PC-3 (cell line): ENCODE measurements at regions of chr10 and their contacts with region 1.

Region 1: DNA sequence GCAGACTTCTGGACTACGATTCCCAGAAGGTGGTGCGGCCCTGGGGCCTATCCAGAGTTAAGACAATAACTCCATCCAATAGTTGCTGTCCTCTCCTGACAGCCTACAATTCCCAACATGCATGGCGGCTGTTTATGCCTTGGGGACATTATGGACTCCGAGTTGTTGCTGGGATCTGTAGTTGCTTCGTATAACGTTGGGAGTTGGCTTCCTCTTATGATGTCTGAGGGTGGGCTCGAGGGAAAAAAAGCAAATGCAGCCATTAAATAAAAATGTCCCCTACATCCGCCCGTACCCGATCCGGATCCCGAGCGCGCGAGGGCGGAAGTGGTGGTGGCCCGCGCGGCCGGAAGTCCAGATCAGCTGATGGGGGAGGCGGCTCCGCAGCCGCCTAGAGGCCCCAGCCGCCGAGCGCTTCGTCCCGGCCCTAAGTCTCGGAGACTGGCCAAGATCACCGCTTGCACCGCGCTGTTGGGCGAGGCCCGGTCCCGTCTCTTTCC is at the start of gene ZSWIM8:
- DNase-seq: peak; percentile 100
- ATAC-seq: peak; percentile 81
- H3K4me3 ChIP-seq: peak within 1 kb of the TSS; percentile 80
- H3K27ac ChIP-seq: peak within 1 kb of the TSS; percentile 36
- H3K4me1 ChIP-seq: peaks cover 38% of the 10 kb centered on the region
- H3K27me3 ChIP-seq: no peaks in the 10 kb centered on the region
- CTCF ChIP-seq: no peak
- total RNA-seq, gene ZSWIM8: 152 and 173 TPM in 2 replicates

Region 2: DNA sequence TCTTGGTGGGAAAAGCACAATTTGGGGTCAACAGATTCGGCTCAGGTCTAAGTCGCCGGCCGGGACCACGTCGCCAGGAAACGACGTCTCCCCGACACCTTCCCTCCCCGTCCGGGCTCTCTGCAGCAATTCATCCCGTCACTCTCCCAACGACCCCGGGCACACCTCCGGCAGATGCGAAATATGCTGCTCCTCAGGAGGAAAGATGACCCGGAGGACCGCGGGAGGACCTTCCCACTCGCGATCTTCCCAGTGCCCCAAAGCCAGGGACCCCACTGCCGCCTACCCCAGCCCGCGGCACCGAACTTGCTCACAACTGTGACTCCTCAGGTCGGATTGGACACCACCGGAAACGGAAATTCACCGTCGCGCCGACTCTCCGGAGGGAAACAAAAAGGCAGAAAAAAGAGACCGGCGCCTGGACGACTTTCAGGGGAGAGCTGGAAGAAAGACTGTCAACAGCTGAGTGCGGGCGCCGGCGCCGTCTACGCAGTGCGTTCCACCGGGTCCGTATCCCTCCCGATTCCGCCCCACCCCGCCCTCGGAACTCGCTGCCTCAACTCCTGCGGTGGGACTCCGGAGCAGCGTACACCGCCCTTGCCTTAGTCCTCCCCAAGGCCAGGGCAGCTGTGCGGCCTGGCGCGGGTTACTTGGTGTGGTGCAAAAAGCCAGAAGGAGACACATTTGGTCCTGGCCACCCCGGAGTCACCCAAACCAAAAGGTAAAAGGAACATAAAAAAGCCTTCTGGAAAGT is 54.9 kb before region 1 on chr10:
- CTCF ChIA-PET with region 1: interaction called, 3 read pairs
- POLR2A ChIA-PET with region 1: interaction called, 51 read pairs
- intact Hi-C with region 1: loop called (anchors 2 kb)
- DNase-seq: peak; percentile 100
- ATAC-seq: peak; percentile 87
- H3K4me3 ChIP-seq: peak overlapping the region; percentile 69
- H3K27ac ChIP-seq: peak overlapping the region; percentile 72
- H3K4me1 ChIP-seq: peaks cover 9% of the 10 kb centered on the region
- H3K27me3 ChIP-seq: no peaks in the 10 kb centered on the region
- CTCF ChIP-seq: no peak

Region 3: DNA sequence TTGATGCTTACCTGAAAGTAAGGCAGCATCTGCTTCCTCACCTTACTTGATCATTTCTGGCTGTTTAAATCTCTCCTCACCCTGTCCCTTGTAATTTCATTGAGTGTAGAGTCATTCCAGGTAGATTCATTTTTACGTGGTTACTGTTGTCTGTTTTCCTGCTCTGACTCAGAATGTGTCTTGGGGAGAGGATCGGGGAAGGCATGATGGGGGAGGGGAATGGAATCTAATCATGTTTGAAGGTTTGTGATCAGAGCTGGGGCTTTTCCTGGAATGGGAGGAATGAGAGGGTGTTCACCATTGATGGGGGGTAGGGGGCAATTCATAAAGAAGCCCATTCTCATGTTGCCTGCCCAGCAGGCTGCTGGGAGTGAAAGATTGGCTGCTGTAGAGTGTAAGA is 22.4 kb before region 1 on chr10:
- CTCF ChIA-PET with region 1: no interaction called
- POLR2A ChIA-PET with region 1: interaction called, 14 read pairs
- intact Hi-C with region 1: no loop called
- DNase-seq: peak; percentile 99
- ATAC-seq: peak; percentile 94
- H3K4me3 ChIP-seq: peak overlapping the region; percentile 1; the same call in 1 of the 2 replicates
- H3K27ac ChIP-seq: peak overlapping the region; percentile 56
- H3K4me1 ChIP-seq: peaks cover 34% of the 10 kb centered on the region
- H3K27me3 ChIP-seq: no peaks in the 10 kb centered on the region
- CTCF ChIP-seq: no peak

Region 4: GRCh38 chr10:73798927-73799563 is 13.8 kb after region 1 on chr10:
- CTCF ChIA-PET with region 1: no interaction called
- POLR2A ChIA-PET with region 1: interaction called, 15 read pairs
- intact Hi-C with region 1: no loop called
- DNase-seq: no peak
- ATAC-seq: peak; percentile 2
- H3K4me3 ChIP-seq: no peak overlapping the region
- H3K27ac ChIP-seq: no peak overlapping the region
- H3K4me1 ChIP-seq: no peaks in the 10 kb centered on the region
- H3K27me3 ChIP-seq: no peaks in the 10 kb centered on the region
- CTCF ChIP-seq: no peak

Region 5: GRCh38 chr10:73819513-73820093 is 34.3 kb after region 1 on chr10:
- CTCF ChIA-PET with region 1: interaction called, 10 read pairs
- POLR2A ChIA-PET with region 1: interaction called, 5 read pairs
- intact Hi-C with region 1: no loop called
- DNase-seq: peak; percentile 97
- ATAC-seq: peak; percentile 94
- H3K4me3 ChIP-seq: peak overlapping the region; percentile 33
- H3K27ac ChIP-seq: peak overlapping the region; percentile 66
- H3K4me1 ChIP-seq: peaks cover 22% of the 10 kb centered on the region
- H3K27me3 ChIP-seq: no peaks in the 10 kb centered on the region
- CTCF ChIP-seq: peak; percentile 89